Colonic mucosa (tissue), 4 donors: ENCODE measurements at regions of chr4 and their contacts with region 1.

Region 1: DNA sequence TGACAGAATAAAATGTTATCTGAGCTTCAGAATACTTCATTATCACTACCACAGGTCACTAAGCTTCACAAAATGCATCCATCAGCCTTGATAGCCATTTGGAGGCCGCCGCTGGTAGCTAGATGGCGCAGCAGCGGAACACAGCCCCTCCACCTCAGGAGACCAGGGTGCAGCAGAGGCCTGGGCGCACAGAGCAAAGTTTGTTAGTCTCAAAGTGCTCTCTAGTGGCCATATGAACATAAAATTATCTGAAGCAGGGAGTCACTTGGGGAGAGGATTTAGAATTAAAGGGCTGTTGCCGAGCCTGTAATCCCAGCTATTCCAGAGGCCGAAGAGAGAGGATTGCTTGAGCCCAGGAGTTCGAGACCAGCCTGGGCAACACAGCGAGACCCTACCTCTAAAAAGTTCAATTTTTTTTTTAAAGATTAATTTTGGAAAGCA is 8.1 kb upstream of the DCTD start:
- DNase-seq: peak; percentile 49
- H3K4me3 ChIP-seq: no peak overlapping the region
- H3K27ac ChIP-seq: no peak overlapping the region
- H3K4me1 ChIP-seq: no peaks in the 10 kb centered on the region
- H3K27me3 ChIP-seq: no peaks in the 10 kb centered on the region
- CTCF ChIP-seq: peak; percentile 36

Region 2: GRCh38 chr4:182486881-182487280 is 438.4 kb before region 1 on chr4:
- intact Hi-C with region 1: loop called (anchors 10 kb)
- DNase-seq: no peak
- H3K4me3 ChIP-seq: no peak overlapping the region
- H3K27ac ChIP-seq: no peak overlapping the region
- H3K4me1 ChIP-seq: no peaks in the 10 kb centered on the region
- H3K27me3 ChIP-seq: no peaks in the 10 kb centered on the region
- CTCF ChIP-seq: no peak

Region 3: DNA sequence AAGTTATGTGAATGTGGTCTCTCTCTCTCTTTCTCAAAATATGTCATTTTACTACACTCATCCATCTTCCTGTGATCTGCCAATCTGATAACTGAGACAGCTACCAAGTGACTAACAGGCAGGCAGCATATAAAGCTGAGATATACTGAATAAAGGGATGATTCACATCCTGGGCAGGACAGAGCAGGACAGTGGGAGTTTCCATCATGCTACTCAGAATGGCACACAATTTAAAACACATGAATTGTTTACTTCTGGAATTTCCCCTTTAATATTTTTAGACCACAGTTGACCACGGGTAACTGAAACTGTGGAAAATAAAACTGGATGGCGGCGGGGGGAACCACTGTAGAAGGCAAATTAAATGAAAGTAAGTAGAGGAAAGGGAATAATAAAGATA is 50.5 kb after region 1 on chr4:
- intact Hi-C with region 1: no loop called
- DNase-seq: no peak
- H3K4me3 ChIP-seq: no peak overlapping the region
- H3K27ac ChIP-seq: no peak overlapping the region
- H3K4me1 ChIP-seq: no peaks in the 10 kb centered on the region
- H3K27me3 ChIP-seq: no peaks in the 10 kb centered on the region
- CTCF ChIP-seq: no peak

Region 4: DNA sequence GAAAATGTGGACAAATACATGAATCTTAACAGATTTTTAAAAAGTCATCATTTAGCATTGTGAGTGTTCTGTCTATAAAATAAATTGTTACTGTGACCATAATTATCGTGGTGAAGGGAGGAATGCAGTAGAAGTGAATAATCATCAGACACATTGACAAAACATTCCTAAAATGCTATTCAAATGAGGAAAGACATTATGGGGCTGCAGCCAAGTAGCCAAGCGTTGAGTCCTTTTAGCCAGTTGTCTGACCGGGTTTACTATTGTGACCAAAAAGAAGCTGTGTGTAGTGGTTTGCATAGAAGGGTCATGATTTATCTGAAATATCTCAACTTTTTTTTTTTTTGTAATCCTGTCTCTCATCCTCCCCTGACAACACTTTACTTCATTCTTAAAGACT is 193.3 kb after region 1 on chr4:
- intact Hi-C with region 1: no loop called
- DNase-seq: no peak
- H3K4me3 ChIP-seq: no peak overlapping the region
- H3K27ac ChIP-seq: no peak overlapping the region
- H3K4me1 ChIP-seq: no peaks in the 10 kb centered on the region
- H3K27me3 ChIP-seq: no peaks in the 10 kb centered on the region
- CTCF ChIP-seq: no peak

Region 5: DNA sequence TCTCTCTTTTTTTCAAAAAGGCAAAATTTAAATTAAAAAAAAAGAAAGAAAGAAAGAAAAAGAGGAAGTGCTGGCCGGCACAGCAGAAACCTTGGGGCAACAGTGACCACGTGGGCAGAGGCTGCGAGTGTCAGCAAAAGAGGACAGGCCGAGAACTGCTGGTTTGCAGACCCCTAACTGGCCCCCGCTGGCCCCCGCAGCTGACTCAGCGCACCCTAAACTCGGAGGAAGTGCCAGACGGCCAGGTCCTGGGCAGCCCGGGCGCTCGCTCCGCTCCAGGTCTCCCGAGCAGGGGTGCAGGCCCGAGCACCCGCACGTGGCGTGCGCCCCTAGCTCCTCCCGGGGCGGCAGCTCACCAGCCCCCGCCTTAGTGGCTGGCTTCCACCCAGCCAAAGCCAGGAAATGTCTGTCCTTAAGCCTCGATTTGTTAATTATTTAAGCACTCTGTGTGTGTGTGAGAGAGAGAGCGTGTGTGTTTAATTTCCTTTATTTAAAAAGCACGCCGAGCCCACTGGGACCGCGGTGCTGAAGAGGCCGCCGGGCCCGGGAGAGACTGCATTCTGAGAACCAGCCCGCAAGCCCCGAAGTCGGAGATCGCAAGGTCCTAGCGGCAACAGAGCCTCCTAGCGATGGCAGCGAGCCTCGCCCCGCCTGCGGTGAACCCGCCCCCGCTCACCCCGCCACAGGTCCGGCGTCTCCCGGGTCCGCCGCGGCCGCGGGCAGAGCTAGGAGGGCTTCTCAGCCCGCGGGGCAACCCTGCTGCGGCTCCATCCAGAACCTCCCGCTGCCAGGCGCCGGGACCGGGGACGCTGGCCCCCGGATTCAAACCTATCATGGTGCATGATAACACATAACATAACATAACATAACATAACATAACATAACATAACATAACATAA is 473.2 kb after region 1 on chr4:
- intact Hi-C with region 1: loop called (anchors 10 kb)
- DNase-seq: peak; percentile 78
- H3K4me3 ChIP-seq: peak overlapping the region; percentile 61
- H3K27ac ChIP-seq: peak overlapping the region; percentile 38
- H3K4me1 ChIP-seq: peaks cover 2% of the 10 kb centered on the region
- H3K27me3 ChIP-seq: no peaks in the 10 kb centered on the region
- CTCF ChIP-seq: peak; percentile 42